ENCODE measurements at regions of chr21 and their contacts with region 1.

Region 1: GRCh38 chr21:33751120-33751519 is 108.8 kb downstream of the ITSN1 start:
- DNase-seq: no peak
- ATAC-seq: no peak
- H3K4me3 ChIP-seq: no peak overlapping the region
- H3K27ac ChIP-seq: no peak overlapping the region
- H3K4me1 ChIP-seq: peaks cover 0 to 3% of the 10 kb centered on the region in 2 donors
- H3K27me3 ChIP-seq: no peaks in the 10 kb centered on the region

Region 2: DNA sequence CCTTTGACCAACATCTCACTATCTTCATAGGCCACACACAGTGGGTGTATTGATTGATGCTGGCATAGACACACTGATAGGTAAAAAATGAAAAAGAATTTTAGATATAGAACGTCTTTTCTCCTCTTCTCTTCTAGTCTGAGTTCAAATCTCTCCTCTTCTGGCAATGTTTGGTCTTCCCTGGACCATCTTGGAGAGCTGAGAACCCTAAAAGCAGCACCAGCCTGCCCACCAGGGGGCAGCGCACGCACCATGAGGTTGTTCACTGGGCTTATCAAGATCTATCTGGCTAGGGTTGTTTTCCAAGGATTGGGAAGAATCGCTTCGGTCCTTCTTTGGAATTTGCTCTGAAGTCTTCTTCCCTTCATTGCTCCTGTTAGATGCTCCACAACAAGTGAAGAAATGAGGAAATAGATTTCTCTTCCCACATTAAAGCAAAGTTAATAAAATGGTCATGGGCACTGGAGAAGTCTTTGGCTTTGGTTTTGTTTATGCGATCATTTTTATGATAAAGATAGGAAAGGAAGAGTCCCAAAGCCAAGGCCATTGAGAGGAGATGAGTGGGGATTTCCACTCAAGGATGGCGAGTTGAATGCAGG is 829.4 kb before region 1 on chr21:
- intact Hi-C with region 1: no loop called
- DNase-seq: no peak
- ATAC-seq: no peak
- H3K4me3 ChIP-seq: no peak overlapping the region
- H3K27ac ChIP-seq: no peak overlapping the region
- H3K4me1 ChIP-seq: no peaks in the 10 kb centered on the region
- H3K27me3 ChIP-seq: no peaks in the 10 kb centered on the region

Region 3: DNA sequence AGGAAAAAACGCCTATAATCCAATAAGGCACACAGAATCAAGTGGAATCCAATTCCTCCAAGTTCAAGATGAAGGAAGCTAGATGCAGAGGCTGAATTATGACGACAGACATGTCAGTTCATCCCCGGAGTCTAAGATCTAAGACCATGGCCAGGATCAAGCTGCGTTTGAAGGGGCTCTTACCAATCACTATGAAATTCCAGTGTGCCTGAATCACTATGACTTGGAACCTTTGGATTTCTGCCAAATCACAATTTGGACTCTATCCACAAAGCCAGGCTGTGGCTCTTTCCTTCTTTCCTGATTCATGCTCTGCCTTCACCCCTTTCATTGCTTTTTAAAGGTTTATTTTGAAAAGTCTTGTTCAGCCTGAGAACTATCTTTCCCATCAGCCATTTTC is 708.3 kb before region 1 on chr21:
- intact Hi-C with region 1: no loop called
- DNase-seq: no peak
- ATAC-seq: no peak
- H3K4me3 ChIP-seq: no peak overlapping the region
- H3K27ac ChIP-seq: no peak overlapping the region
- H3K4me1 ChIP-seq: no peaks in the 10 kb centered on the region
- H3K27me3 ChIP-seq: no peaks in the 10 kb centered on the region

Region 4: GRCh38 chr21:33682992-33683627 is 68.0 kb before region 1 on chr21:
- intact Hi-C with region 1: loop called in 1 of 2 experiments (anchors 10 kb)
- DNase-seq: no peak
- ATAC-seq: peak; percentile 52
- H3K4me3 ChIP-seq: no peak overlapping the region
- H3K27ac ChIP-seq: peak overlapping the region in 1 of 2 donors; percentile 67
- H3K4me1 ChIP-seq: peaks cover 0 to 13% of the 10 kb centered on the region in 2 donors
- H3K27me3 ChIP-seq: no peaks in the 10 kb centered on the region

Region 5: DNA sequence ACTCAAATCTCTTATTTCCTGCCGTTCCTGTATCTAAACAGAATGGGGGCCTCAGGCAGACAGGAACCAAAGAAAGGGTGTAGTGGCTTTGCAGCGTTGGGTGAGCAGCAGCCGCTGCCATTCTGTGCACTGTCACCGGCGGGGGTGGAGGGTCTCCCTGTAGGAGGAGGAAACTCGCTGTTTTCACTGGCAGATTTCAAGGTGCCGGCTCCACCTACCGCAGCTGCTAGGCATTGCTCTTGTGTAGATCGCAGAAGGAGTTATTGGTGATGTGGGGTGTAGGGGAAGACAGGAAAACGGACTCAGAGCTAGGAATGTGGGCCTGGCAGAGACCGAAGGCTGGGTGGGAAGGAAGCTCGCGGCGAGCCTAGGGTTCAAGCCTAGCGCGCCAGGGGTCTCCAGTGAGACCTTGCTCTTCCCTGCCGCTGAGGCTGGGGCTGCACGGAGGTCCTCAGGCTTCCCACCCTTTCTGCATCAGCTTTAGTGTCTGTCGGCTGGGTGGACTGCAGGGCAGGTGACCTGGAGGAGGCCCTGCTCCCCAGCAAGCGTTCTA is 143.7 kb after region 1 on chr21:
- intact Hi-C with region 1: loop called in 1 of 2 experiments (anchors 10 kb)
- DNase-seq: peak; percentile 90 to 92
- ATAC-seq: peak; percentile 87
- H3K4me3 ChIP-seq: peak overlapping the region in 1 of 2 donors; percentile 24
- H3K27ac ChIP-seq: no peak overlapping the region
- H3K4me1 ChIP-seq: peaks cover 0 to 4% of the 10 kb centered on the region in 2 donors
- H3K27me3 ChIP-seq: no peaks in the 10 kb centered on the region